Testis (tissue), 5 donors: ENCODE measurements at regions of chr9 and their contacts with region 1.

Region 1: DNA sequence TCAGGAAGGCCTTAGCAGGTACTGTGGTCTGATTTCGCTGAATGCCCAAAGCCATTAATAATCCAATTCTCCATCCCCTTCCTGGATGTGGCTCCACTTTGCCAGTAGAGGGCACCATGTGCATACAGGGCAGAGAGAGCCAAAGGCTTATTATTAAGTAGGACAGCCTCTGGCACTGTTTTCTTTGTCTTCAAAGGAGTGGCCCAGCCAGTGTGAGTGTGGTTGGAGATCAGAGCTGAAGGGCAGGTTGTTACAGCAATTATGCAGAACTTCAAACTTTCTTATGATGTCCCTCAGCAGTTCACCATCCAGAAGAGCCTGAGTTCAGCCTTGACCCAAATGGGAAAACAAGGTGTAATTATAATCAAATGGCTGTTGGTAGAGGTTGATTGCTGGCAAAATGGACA is 38.6 kb upstream of the CEMIP2 start:
- DNase-seq: peak; percentile 85
- H3K4me3 ChIP-seq: no peak overlapping the region
- H3K27ac ChIP-seq: no peak overlapping the region
- H3K4me1 ChIP-seq: peaks cover 4% of the 10 kb centered on the region
- H3K27me3 ChIP-seq: no peaks in the 10 kb centered on the region
- CTCF ChIP-seq: peak; percentile 44 to 83 (median 82)
- POLR2A ChIP-seq: no peak

Region 2: GRCh38 chr9:71675129-71675856 is 131.6 kb before region 1 on chr9:
- intact Hi-C with region 1: no loop called
- DNase-seq: no peak
- H3K4me3 ChIP-seq: no peak overlapping the region
- H3K27ac ChIP-seq: no peak overlapping the region
- H3K4me1 ChIP-seq: no peaks in the 10 kb centered on the region
- H3K27me3 ChIP-seq: no peaks in the 10 kb centered on the region
- CTCF ChIP-seq: no peak
- POLR2A ChIP-seq: no peak

Region 3: GRCh38 chr9:71703172-71703872 is 103.6 kb before region 1 on chr9:
- intact Hi-C with region 1: no loop called
- DNase-seq: no peak
- H3K4me3 ChIP-seq: no peak overlapping the region
- H3K27ac ChIP-seq: no peak overlapping the region
- H3K4me1 ChIP-seq: no peaks in the 10 kb centered on the region
- H3K27me3 ChIP-seq: no peaks in the 10 kb centered on the region
- CTCF ChIP-seq: no peak
- POLR2A ChIP-seq: no peak

Region 4: GRCh38 chr9:71847892-71848291 is 41.0 kb after region 1 on chr9:
- intact Hi-C with region 1: no loop called
- DNase-seq: no peak
- H3K4me3 ChIP-seq: no peak overlapping the region
- H3K27ac ChIP-seq: no peak overlapping the region
- H3K4me1 ChIP-seq: no peaks in the 10 kb centered on the region
- H3K27me3 ChIP-seq: no peaks in the 10 kb centered on the region
- CTCF ChIP-seq: no peak
- POLR2A ChIP-seq: no peak

Region 5: GRCh38 chr9:72022841-72023240 is 215.9 kb after region 1 on chr9:
- intact Hi-C with region 1: loop called (anchors 10 kb)
- DNase-seq: no peak
- H3K4me3 ChIP-seq: no peak overlapping the region
- H3K27ac ChIP-seq: no peak overlapping the region
- H3K4me1 ChIP-seq: no peaks in the 10 kb centered on the region
- H3K27me3 ChIP-seq: no peaks in the 10 kb centered on the region
- CTCF ChIP-seq: no peak
- POLR2A ChIP-seq: no peak